ENCODE measurements at regions of chr1 and their contacts with region 1.

Region 1: DNA sequence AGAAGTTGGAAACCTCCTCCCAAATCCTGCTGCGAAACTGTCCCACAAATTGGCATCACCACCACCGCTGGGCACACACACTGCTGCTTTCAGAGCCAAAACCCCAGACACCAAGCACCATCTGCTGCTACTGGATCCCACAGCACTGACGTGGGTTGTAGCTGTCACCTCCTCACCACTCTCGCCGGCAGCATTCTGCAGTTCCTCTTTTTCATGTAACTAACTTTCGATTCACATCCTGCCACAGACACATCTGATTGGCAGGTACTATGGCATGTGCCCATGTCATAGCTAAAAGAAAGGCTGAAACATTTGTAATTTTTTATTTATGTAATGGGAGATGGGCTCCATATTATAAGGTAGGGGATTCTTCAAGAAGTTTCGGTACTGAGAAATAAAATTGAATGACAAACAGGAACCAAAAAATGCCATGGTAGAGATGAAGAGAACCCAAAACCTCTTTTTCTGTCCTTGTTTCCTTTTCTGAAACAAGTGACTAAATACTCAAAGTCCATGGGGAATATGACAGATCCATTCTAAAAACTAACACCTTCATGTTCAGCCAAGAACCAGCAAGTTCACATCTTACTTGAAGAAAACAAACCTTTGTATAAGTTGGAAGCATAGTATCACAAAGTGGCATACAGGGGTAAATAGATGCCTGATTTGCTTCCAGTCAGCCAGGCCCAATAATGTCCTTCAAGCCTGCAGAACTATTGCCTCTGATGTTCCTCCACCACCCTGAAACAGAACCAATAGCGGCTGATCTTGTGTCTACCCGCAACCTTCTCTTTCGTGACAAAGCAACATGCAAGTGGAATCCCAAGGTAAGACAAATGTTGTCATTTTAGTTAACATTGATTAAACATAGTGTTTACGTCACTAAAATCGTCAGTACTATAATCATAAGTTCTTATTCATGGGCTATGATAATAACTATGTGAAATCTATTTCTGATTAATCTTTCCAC is 26.6 kb upstream of the RGS13 start:
- DNase-seq: peak; percentile 92
- ATAC-seq: peak; percentile 93
- H3K4me3 ChIP-seq: peak overlapping the region in 1 of 5 experiments; percentile 0
- H3K4me3 Mint-ChIP-seq: peak overlapping the region; percentile 47
- H3K27ac ChIP-seq: peak overlapping the region; percentile 22 to 66
- H3K27ac Mint-ChIP-seq: peak overlapping the region; percentile 87
- H3K4me1 ChIP-seq: peaks cover 24 to 31% of the 10 kb centered on the region in 2 donors
- H3K4me1 Mint-ChIP-seq: peaks cover 31% of the 10 kb centered on the region
- H3K27me3 ChIP-seq: peaks cover 2 to 17% (median 5%) of the 10 kb centered on the region in 4 experiments
- H3K27me3 Mint-ChIP-seq: peaks cover 11% of the 10 kb centered on the region
- CTCF ChIP-seq: no peak

Region 2: DNA sequence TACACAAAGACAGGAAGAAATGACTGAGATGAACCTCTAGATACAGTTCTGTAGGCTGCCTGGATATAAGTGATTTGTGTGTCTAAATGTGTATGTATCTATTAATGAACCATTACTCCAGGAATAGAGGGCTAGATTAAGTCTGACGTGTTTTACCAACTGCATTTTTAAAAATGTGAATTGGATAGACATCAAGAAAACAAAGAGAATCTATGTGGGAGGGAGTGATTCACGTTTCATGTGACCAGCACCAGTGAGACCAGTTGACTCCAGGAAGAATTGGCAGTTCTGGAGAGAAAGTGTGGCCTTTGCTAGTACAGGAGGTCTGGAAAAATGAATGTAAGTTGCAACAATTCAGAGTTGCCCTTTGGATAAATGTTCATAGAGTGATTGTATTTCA is 346.0 kb before region 1 on chr1:
- CTCF ChIA-PET with region 1: no interaction called
- POLR2A ChIA-PET with region 1: no interaction called
- intact Hi-C with region 1: no loop called
- DNase-seq: no peak
- ATAC-seq: no peak
- H3K4me3 ChIP-seq: no peak overlapping the region
- H3K4me3 Mint-ChIP-seq: no peak overlapping the region
- H3K27ac ChIP-seq: no peak overlapping the region
- H3K27ac Mint-ChIP-seq: no peak overlapping the region
- H3K4me1 ChIP-seq: no peaks in the 10 kb centered on the region
- H3K4me1 Mint-ChIP-seq: no peaks in the 10 kb centered on the region
- H3K27me3 ChIP-seq: no peaks in the 10 kb centered on the region
- H3K27me3 Mint-ChIP-seq: no peaks in the 10 kb centered on the region
- CTCF ChIP-seq: no peak

Region 3: DNA sequence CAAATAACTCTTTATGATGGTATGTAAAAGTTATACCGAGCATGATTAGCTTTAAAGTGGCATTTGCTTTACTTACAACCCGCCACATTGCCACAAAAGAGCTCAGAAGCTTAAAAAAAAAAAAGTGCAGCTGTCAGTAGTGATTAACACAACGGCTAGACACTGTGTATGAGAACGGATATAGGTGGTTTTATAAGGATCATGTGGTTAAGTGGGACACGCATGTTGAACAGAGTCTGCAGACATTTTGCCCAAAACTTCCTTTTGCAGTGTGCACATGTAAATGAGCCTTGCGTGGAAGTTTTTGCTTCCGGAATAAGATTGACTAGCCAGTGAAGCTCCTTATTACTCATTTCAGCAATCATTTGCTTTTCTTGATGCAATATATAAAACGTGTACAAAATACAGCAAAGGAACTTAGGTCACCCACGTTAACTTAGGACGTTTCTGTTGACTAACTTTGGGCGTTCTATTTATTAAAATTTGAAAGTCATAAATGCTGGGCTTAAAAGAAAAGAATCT is 92.6 kb before region 1 on chr1:
- CTCF ChIA-PET with region 1: interaction called, 11 read pairs
- POLR2A ChIA-PET with region 1: interaction called, 4 read pairs
- intact Hi-C with region 1: loop called (anchors 1 kb)
- DNase-seq: peak; percentile 92
- ATAC-seq: peak; percentile 96
- H3K4me3 ChIP-seq: peak overlapping the region in 2 of 5 experiments; percentile 7 to 44
- H3K4me3 Mint-ChIP-seq: peak overlapping the region; percentile 80
- H3K27ac ChIP-seq: peak overlapping the region in 1 of 2 donors; percentile 57
- H3K27ac Mint-ChIP-seq: peak overlapping the region; percentile 64
- H3K4me1 ChIP-seq: peaks cover 43 to 51% of the 10 kb centered on the region in 2 donors
- H3K4me1 Mint-ChIP-seq: peaks cover 52% of the 10 kb centered on the region
- H3K27me3 ChIP-seq: peaks cover 0 to 17% (median 7%) of the 10 kb centered on the region in 4 experiments
- H3K27me3 Mint-ChIP-seq: peaks cover 18% of the 10 kb centered on the region
- CTCF ChIP-seq: no peak

Region 4: DNA sequence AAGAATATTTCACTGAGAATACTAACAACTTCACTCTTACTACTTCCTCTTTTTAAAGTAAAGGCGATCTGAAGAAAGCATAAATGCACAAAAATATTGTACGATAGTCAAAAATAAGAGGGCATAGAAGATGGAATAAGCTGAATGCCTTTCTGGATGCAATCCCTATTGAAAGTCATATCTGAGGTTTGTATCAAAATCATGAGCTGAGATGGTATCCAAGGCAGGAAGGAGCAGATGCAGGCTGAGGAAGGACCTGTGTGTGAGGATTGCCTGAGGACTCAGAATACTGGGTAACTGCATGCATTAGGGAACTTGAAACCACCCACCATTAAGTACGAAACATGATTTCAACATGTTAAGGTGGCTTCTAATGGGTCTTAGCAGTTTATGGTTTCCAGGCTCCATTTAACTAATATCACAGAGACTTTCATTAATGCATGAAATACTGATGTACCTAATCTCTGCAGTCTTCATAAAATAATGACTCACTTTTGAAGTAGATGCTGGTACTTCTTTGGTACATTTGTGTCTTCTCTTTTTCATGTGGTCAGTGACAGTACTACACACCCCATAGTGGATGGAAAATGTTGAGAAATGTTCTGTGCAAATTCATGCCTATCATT is 63.4 kb before region 1 on chr1:
- CTCF ChIA-PET with region 1: interaction called, 5 read pairs
- POLR2A ChIA-PET with region 1: no interaction called
- intact Hi-C with region 1: loop called (anchors 1 kb)
- DNase-seq: peak; percentile 75
- ATAC-seq: peak; percentile 79
- H3K4me3 ChIP-seq: peak overlapping the region in 4 of 5 experiments; percentile 18 to 63 (median 34)
- H3K4me3 Mint-ChIP-seq: peak overlapping the region; percentile 85
- H3K27ac ChIP-seq: peak overlapping the region in 1 of 2 donors; percentile 39
- H3K27ac Mint-ChIP-seq: peak overlapping the region; percentile 81
- H3K4me1 ChIP-seq: peaks cover 12% of the 10 kb centered on the region in 2 donors
- H3K4me1 Mint-ChIP-seq: peaks cover 35% of the 10 kb centered on the region
- H3K27me3 ChIP-seq: peaks cover 0 to 4% (median 0%) of the 10 kb centered on the region in 4 experiments
- H3K27me3 Mint-ChIP-seq: peaks cover 11% of the 10 kb centered on the region
- CTCF ChIP-seq: peak; percentile 51

Region 5: DNA sequence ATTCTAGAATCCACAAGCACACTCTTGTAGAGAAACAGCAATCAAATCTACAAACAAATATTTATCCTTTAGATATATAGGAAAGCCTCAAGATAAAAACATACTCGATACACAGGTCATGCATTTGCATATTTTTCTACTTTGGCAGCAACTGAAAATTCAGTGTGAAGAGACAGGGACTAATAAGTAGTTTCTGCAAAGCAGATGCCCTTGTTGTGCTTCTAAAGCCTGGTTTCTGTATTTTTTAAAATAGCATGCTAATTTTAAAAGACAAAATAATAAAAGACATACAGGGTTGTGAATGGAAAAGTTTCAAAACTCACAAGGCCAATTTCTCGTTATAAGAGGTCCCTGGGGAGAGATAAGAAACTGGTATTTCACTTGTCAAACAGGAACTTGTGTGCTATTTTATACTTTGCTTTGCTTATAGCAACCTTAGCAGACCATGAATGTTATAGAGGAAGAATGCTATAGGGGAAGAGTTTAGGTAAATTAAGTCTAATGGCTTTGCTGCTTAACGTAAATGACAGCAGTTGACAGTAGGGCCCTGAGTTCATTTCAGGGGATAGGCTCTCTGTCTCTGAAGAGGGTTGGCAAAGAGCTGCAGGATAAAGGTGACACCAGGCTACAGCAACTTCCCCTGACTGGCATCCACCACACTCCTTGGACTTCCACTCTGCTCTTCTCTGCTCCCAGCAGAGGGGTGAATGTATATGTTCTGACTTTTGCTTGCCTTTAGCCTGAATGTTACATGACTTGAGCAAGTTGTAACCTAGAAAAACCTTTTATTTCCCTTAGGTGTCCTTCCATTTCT is 17.2 kb after region 1 on chr1:
- CTCF ChIA-PET with region 1: interaction called, 5 read pairs
- POLR2A ChIA-PET with region 1: no interaction called
- intact Hi-C with region 1: loop called (anchors 2 kb)
- DNase-seq: peak; percentile 61
- ATAC-seq: peak; percentile 93
- H3K4me3 ChIP-seq: no peak overlapping the region
- H3K4me3 Mint-ChIP-seq: peak overlapping the region; percentile 30
- H3K27ac ChIP-seq: no peak overlapping the region
- H3K27ac Mint-ChIP-seq: no peak overlapping the region
- H3K4me1 ChIP-seq: peaks cover 11 to 16% of the 10 kb centered on the region in 2 donors
- H3K4me1 Mint-ChIP-seq: peaks cover 12% of the 10 kb centered on the region
- H3K27me3 ChIP-seq: peaks cover 5 to 57% (median 47%) of the 10 kb centered on the region in 4 experiments
- H3K27me3 Mint-ChIP-seq: peaks cover 77% of the 10 kb centered on the region
- CTCF ChIP-seq: no peak

Region 6: GRCh38 chr1:193059268-193060225 is 450.2 kb after region 1 on chr1 and contains the starts of genes RO60 and UCHL5:
- CTCF ChIA-PET with region 1: no interaction called
- POLR2A ChIA-PET with region 1: no interaction called
- intact Hi-C with region 1: loop called (anchors 2 kb)
- DNase-seq: peak; percentile 96
- ATAC-seq: peak; percentile 95
- H3K4me3 ChIP-seq: peak within 1 kb of the TSS; percentile 62 to 99 (median 91)
- H3K4me3 Mint-ChIP-seq: peak within 1 kb of the TSS; percentile 98
- H3K27ac ChIP-seq: peak within 1 kb of the TSS; percentile 89 to 94
- H3K27ac Mint-ChIP-seq: peak within 1 kb of the TSS; percentile 99
- H3K4me1 ChIP-seq: peaks cover 21 to 25% of the 10 kb centered on the region in 2 donors
- H3K4me1 Mint-ChIP-seq: peaks cover 51% of the 10 kb centered on the region
- H3K27me3 ChIP-seq: no peaks in the 10 kb centered on the region
- H3K27me3 Mint-ChIP-seq: no peaks in the 10 kb centered on the region
- CTCF ChIP-seq: no peak
- total RNA-seq, gene RO60: 66.4 and 78.2 TPM in 2 replicates
- total RNA-seq, gene UCHL5: 31.5 and 32.9 TPM in 2 replicates

Measured in B cell (primary cell).